ENCODE measurements at regions of chr11 and their contacts with region 1.

Region 1: DNA sequence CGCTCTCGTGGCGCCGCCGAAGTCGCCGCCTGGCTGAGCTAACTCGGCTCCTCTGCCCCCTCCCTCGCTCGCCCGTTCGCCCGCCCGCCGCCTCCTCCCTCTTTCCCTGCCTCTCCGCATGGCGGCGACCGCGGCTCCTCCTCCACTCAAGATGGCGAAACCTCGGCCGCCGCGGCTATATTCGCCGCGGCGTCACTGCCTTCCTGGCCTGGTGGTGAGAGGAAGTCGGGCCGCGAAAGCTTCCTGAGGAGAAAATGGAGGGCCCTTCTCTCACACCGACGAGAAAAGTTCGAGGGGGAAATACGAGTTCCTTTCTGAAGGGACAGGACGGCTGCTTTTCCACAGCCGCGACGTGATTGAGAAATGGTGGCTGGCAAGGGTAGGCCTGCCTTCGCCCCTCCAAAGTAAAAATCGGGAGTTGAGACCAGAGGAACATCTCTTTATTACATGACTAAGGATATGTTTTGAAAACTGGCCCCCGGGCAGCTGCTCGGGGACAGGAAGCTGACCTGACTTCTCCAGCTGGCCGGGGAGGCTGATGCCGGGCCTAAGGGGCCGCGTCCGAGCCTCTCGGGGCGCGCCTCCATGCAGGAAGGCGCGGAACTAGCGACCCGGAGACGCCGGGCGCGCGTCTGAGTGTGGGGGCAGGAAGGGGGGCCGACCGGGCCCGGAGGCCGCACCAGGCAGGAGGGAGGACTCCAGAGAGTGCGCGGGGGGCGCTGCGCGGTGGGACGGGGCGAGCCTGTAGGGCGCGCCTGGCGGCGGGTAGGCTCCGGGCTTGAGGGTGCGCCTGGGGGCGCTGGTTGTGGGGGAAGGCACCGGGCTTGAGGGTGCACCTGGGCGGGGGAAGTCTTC is at the start of gene DDX6:
- DNase-seq: peak; percentile 91 to 92 (median 92)
- ATAC-seq: peak; percentile 80
- H3K4me3 ChIP-seq: peak within 1 kb of the TSS; percentile 90
- H3K27ac ChIP-seq: peak within 1 kb of the TSS; percentile 96
- H3K4me1 ChIP-seq: peaks cover 3 to 18% of the 10 kb centered on the region in 2 experiments; a peak in 4 of 5 replicates
- H3K27me3 ChIP-seq: no peaks in the 10 kb centered on the region
- CTCF ChIP-seq: peak; percentile 26 to 73 (median 44); a peak in 4 of 6 replicates
- EP300 ChIP-seq: no peak
- POLR2A ChIP-seq: peak; percentile 94
- RAD21 ChIP-seq: peak in 1 of 2 experiments; percentile 17; a peak in 1 of 4 replicates
- polyA plus RNA-seq, gene DDX6: 10.0 to 15.5 TPM

Region 2: DNA sequence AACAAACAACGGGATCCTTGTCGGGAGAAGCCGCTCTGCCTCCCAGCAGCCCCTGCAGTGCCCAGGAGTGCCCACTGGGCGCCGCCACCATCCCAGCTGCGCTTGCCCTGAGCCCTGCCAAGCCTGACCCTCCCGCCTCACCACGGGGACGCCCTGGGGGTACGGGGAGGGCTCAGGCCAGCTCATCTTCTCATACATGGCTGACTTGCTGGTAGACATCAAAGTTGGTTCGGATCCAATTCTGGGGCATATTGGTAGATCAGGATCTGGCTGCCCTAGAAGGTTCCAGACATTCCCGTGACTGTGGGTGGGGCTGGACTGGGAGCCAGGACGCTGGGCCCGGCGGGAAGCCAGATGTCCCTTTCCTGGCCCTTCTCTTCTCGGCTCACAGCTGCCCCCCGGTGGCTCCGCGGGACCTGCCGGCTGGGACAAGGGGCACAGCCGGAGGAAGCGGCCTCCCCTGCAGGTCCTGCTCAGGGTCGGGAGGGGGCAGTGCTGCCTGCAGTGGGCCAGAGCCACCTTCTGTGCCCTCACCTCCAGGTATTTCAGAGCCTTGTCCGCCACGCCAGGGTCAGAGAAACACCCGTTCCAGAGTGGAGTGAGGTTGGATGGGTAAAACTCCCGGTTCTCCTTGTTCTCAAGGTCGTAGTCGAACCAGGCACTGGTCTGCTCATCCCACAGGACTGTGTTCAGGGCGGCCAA is 101.3 kb before region 1 on chr11:
- CTCF ChIA-PET with region 1: interaction called, 6 read pairs
- POLR2A ChIA-PET with region 1: interaction called, 5 read pairs
- in situ Hi-C with region 1: no loop called
- intact Hi-C with region 1: loop called (anchors 1 kb)
- DNase-seq: peak; percentile 91 to 96 (median 94)
- ATAC-seq: peak; percentile 99
- H3K4me3 ChIP-seq: no peak overlapping the region
- H3K27ac ChIP-seq: peak overlapping the region; percentile 11; the same call in 2 of the 3 replicates
- H3K4me1 ChIP-seq: peaks cover 0 to 36% of the 10 kb centered on the region in 2 experiments; a peak in 3 of 5 replicates
- H3K27me3 ChIP-seq: no peaks in the 10 kb centered on the region
- CTCF ChIP-seq: peak; percentile 98 to 99 (median 99)
- EP300 ChIP-seq: no peak
- POLR2A ChIP-seq: no peak
- RAD21 ChIP-seq: peak; percentile 89 to 96

Region 3: GRCh38 chr11:118804094-118804493 is 12.8 kb after region 1 on chr11:
- CTCF ChIA-PET with region 1: no interaction called
- POLR2A ChIA-PET with region 1: interaction called, 25 read pairs
- in situ Hi-C with region 1: no loop called
- intact Hi-C with region 1: no loop called
- DNase-seq: no peak
- ATAC-seq: no peak
- H3K4me3 ChIP-seq: no peak overlapping the region
- H3K27ac ChIP-seq: no peak overlapping the region
- H3K4me1 ChIP-seq: no peaks in the 10 kb centered on the region
- H3K27me3 ChIP-seq: peaks cover 4 to 14% of the 10 kb centered on the region in 2 experiments; a peak in 3 of 5 replicates
- CTCF ChIP-seq: no peak
- EP300 ChIP-seq: no peak
- POLR2A ChIP-seq: no peak
- RAD21 ChIP-seq: no peak

Region 4: GRCh38 chr11:118895142-118896039 is 104.1 kb after region 1 on chr11:
- CTCF ChIA-PET with region 1: no interaction called
- POLR2A ChIA-PET with region 1: interaction called, 15 read pairs
- in situ Hi-C with region 1: no loop called
- intact Hi-C with region 1: no loop called
- DNase-seq: no peak
- ATAC-seq: peak; percentile 39
- H3K4me3 ChIP-seq: no peak overlapping the region
- H3K27ac ChIP-seq: no peak overlapping the region
- H3K4me1 ChIP-seq: peaks cover 0 to 44% of the 10 kb centered on the region in 2 experiments; a peak in 3 of 5 replicates
- H3K27me3 ChIP-seq: no peaks in the 10 kb centered on the region
- CTCF ChIP-seq: no peak
- EP300 ChIP-seq: no peak
- POLR2A ChIP-seq: no peak
- RAD21 ChIP-seq: no peak

Region 5: GRCh38 chr11:119006656-119007055 is 215.3 kb after region 1 on chr11:
- CTCF ChIA-PET with region 1: no interaction called
- POLR2A ChIA-PET with region 1: no interaction called
- in situ Hi-C with region 1: no loop called
- intact Hi-C with region 1: no loop called
- DNase-seq: no peak
- ATAC-seq: no peak
- H3K4me3 ChIP-seq: no peak overlapping the region
- H3K27ac ChIP-seq: no peak overlapping the region
- H3K4me1 ChIP-seq: peaks cover 0 to 3% of the 10 kb centered on the region in 2 experiments; a peak in 1 of 5 replicates
- H3K27me3 ChIP-seq: no peaks in the 10 kb centered on the region
- CTCF ChIP-seq: no peak
- EP300 ChIP-seq: no peak
- POLR2A ChIP-seq: no peak
- RAD21 ChIP-seq: no peak

Measured in K562 (cell line).